ENCODE measurements at regions of chr18 and their contacts with region 1.

Region 1: GRCh38 chr18:58043491-58044379 is at the start of gene NEDD4L:
- DNase-seq: peak; percentile 77 to 98 (median 87)

Region 2: DNA sequence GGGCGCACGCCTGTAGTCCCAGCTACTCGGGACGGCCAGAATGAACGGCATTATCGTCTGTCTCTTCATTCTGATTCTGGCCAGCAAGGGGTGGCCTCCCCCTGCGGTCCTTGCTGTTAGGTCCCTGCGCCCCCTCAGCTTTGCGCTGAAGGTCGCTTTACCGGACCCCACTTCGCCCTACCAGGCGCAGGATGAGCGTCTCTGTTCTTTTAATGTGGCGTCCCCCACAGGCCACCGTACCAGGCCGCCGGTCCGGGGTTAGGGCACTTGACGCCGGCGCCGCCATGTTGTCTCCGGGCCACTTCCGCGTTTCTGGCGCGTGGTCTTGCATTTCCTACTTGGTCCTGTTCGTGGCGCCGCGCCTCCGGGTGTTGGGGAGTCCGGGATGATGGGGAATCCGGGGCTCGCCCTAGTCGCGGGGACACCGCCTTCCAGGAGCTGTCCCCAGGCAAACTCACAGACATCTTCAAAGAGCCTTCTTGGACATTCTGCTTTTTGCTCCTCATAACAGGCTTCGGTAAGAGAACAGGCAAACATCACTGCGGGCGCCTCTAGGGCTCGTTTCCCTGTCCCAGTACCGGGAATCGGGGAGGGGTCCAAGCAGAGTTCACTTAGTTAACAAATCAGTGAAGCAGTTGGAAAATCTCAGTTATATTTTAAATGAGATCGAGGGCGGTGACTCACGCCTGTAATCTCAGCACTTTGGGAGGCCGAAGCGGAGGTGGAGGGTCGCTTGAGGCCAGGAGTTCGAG is 413.6 kb before region 1 on chr18:
- intact Hi-C with region 1: loop called (anchors 2 kb)
- DNase-seq: peak; percentile 95 to 99 (median 97)

Region 3: GRCh38 chr18:57881818-57882413 is 161.8 kb before region 1 on chr18:
- intact Hi-C with region 1: loop called (anchors 2 kb)
- DNase-seq: peak; percentile 31 to 96 (median 73)

Region 4: GRCh38 chr18:58097121-58097906 is 53.6 kb after region 1 on chr18:
- intact Hi-C with region 1: no loop called
- DNase-seq: no peak

Region 5: DNA sequence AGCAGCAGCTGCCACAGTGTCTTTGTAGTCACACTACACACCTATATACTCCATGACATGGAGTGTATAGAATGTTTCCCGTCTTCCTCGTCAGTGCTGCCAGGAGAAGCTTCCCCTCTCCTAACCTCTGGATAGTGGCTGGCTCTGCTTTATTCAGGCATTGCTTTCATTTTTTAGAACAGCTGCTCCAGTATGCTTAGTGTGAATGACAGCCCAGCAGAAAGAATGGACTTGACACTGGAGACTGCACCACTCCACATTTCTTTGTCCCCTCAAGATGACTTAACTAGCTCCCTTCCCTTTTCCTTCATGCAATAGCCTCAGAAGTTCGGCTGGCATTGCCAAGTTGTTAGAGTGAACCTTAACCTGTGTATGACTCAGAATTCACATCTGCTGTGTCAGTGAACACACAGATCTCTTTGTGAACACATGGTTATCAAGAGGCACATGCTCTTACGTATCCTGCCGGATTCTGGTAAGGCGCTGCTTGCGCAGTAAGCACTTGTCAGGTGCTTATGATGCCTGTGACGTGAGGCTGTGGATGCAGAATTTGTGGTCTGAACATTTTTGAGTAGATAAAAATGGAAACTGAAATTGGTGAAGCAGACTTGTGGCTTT is 74.2 kb after region 1 on chr18:
- intact Hi-C with region 1: loop called (anchors 2 kb)
- DNase-seq: peak in 3 of 10 donors; percentile 19 to 86 (median 41)

Region 6: GRCh38 chr18:58135701-58136331 is 92.1 kb after region 1 on chr18:
- intact Hi-C with region 1: loop called (anchors 5 kb)
- DNase-seq: peak in 7 of 10 donors; percentile 31 to 92 (median 65)

Region 7: DNA sequence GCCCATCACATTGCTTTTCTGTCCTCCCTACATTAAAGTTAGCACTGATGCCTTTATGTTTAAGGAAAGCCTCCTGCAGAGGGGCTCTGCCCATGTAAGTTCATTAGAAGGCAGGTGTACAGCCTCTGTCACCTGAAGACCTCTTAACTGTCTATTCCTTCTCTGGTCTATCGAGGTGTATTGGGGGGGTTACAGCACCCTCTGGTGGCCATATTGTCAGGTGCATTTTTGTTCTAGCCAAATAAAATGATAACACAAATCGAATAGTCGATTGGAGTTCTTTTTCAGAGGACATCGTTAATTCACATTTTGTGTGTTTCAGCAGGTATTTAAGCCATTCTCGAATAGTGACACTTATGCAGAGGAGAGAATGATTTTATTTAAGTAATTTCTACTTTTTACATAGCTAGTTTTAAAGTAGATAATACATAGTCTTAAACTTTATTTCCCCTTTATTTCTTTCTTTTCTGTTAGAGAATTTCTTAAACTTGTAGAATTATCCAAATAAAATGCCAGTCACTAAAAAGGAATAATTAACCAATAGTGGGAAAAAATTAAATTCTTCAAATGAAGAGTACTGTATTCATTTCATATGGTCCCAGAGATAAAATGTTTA is 137.1 kb after region 1 on chr18:
- intact Hi-C with region 1: loop called (anchors 5 kb)
- DNase-seq: peak in 5 of 10 donors; percentile 47 to 84 (median 61)

Region 8: GRCh38 chr18:58213440-58213839 is 169.7 kb after region 1 on chr18:
- intact Hi-C with region 1: no loop called
- DNase-seq: no peak

Region 9: DNA sequence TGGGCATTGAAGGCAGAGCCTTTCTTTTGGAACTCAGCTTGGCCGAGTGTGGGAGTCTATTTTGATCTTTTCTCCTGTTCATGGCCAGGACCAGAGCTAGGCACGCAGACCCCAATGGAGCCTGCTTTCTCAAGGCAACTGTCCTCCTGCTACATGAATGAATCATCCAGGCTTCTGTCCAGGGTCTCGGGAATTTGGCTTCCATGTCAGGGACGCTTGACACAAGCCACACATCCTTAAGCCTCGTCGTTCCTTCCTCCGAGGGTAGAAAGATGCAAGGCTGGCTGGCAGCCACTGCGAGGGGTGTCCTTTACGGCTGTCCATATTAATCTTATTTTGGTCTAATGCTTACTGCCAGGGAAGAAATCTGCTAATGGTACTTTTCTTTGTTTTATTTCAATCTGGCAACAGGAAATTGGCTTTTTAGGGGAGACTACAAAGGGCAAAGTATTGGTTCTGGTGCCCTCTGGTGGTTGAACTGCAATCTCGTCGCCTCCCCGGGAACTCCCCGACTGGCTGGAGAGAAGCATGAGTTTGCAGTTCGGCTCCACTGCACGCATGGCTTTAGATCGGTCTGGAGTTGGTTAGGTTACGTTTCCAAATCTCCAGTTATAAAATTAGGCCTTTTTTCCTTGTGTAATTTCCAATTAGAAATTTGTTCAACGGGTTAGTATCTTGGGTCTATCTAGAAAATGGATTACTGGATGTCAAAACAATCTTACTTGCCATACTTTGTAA is 449.9 kb after region 1 on chr18:
- intact Hi-C with region 1: loop called (anchors 5 kb)
- DNase-seq: peak; percentile 65 to 96 (median 80)